K562 (cell line): ENCODE measurements at regions of chr6 and their contacts with region 1.

Region 1: GRCh38 chr6:28489366-28490204 is 26.0 kb downstream of the GPX6 start:
- DNase-seq: peak; percentile 90 to 98 (median 93)
- ATAC-seq: peak; percentile 91
- H3K4me3 ChIP-seq: peak overlapping the region; percentile 57
- H3K27ac ChIP-seq: peak overlapping the region; percentile 88
- H3K4me1 ChIP-seq: peaks cover 9 to 26% of the 10 kb centered on the region in 2 experiments
- H3K27me3 ChIP-seq: no peaks in the 10 kb centered on the region
- CTCF ChIP-seq: no peak
- EP300 ChIP-seq: peak; percentile 62
- POLR2A ChIP-seq: peak; percentile 77
- RAD21 ChIP-seq: no peak

Region 2: DNA sequence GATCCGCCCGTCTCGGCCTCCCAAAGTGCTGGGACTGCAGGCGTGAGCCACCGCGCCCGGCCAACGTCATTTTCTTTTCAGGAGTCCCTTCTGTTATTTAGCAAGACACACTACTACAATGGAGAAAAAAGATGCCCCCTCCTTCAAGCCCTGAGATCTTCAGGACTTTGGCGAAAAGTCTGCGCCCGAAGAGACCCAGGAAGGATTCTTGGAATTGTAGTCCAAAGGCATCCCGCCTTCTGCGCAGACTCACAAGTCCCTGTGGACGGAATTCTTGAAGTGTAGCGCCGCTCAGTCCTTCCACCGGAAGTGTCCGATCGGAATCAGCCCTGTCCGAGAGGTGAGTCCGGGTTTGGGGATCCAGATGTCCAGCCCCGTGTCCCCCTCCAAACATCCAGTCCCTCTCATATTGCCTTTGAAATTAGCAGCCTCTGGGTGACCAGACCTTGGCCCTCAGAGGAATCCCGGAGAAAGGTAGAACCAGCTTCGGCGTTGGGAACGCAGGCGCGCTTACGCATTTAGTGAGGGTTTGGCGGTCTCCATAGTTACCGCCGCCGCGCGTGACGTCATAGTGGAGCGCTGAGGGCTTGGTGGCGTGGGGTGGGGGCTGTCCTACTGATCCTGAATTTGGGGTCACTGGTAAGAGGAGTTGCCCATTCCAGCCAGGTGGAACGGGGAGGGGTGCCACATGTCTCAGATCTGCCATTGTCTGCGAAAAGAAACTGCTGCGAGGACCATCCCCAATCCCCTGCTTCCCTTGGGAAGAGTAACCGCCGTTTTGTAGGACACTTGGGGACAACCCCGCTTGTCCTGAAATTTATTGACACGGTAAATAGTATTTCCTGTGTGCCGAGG is 408.7 kb before region 1 on chr6:
- CTCF ChIA-PET with region 1: no interaction called
- POLR2A ChIA-PET with region 1: no interaction called
- in situ Hi-C with region 1: no loop called
- intact Hi-C with region 1: loop called (anchors 5 kb)
- DNase-seq: peak; percentile 91 to 99 (median 93)
- ATAC-seq: peak; percentile 91
- H3K4me3 ChIP-seq: peak overlapping the region; percentile 96
- H3K27ac ChIP-seq: peak overlapping the region; percentile 94
- H3K4me1 ChIP-seq: peaks cover 0 to 2% of the 10 kb centered on the region in 2 experiments; a peak in 4 of 5 replicates
- H3K27me3 ChIP-seq: no peaks in the 10 kb centered on the region
- CTCF ChIP-seq: no peak; a peak in 1 of 6 replicates
- EP300 ChIP-seq: peak; percentile 68; the same call in 1 of the 2 replicates
- POLR2A ChIP-seq: peak; percentile 79
- RAD21 ChIP-seq: no peak; a peak in 2 of 4 replicates

Region 3: DNA sequence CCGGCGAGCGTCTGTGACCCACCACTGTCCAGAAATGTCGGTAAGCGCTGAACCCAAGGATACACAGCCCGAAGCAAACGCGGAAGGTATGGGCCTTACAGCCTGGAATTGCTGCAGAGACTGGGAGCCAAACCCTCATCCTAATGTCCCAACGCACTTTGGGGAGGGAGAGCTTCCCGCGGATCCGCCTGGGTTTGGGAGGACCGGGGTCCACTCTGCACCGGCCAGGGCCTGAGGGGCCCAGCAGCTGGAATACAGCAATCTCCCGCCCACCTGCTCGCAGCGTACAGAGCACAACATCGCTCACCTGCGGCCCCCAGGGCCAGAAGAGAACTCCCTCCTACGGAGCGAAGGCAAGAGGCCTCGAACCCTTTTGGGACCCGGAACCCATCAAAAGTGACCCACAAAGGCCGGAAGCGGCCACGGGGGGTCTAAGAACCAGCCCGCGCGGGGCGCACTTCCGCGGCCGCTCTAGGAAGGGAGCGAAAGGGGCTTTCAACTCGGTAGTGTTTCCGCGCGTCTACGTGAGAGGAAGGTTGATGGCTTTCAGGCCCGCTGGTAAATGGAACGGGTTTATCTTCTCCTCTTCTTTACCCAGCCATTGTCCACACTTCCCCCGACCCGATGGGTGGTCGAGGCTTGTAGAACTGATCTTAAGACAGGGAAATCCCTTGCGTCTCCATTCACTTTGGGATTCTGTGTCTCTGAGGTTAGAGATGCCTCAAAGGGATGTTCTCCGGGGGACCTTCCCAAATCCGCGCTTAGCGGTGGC is 90.0 kb before region 1 on chr6 and contains the start of gene ZSCAN12:
- CTCF ChIA-PET with region 1: no interaction called
- POLR2A ChIA-PET with region 1: interaction called, 3 read pairs
- in situ Hi-C with region 1: no loop called
- intact Hi-C with region 1: loop called (anchors 1 kb)
- DNase-seq: peak; percentile 90 to 99 (median 91)
- ATAC-seq: peak; percentile 88
- H3K4me3 ChIP-seq: peak within 1 kb of the TSS; percentile 61
- H3K27ac ChIP-seq: peak within 1 kb of the TSS; percentile 80
- H3K4me1 ChIP-seq: peaks cover 21 to 36% of the 10 kb centered on the region in 2 experiments
- H3K27me3 ChIP-seq: no peaks in the 10 kb centered on the region
- CTCF ChIP-seq: peak; percentile 74 to 82 (median 79)
- EP300 ChIP-seq: peak; percentile 74
- POLR2A ChIP-seq: peak; percentile 97
- RAD21 ChIP-seq: peak; percentile 37 to 47
- polyA plus RNA-seq, gene ZSCAN12: 2.5 to 7.9 TPM

Region 4: GRCh38 chr6:28506807-28507475 is 17.4 kb after region 1 on chr6:
- CTCF ChIA-PET with region 1: no interaction called
- POLR2A ChIA-PET with region 1: interaction called, 10 read pairs
- in situ Hi-C with region 1: no loop called
- intact Hi-C with region 1: no loop called
- DNase-seq: no peak
- ATAC-seq: no peak
- H3K4me3 ChIP-seq: no peak overlapping the region
- H3K27ac ChIP-seq: no peak overlapping the region
- H3K4me1 ChIP-seq: peaks cover 15 to 21% of the 10 kb centered on the region in 2 experiments
- H3K27me3 ChIP-seq: no peaks in the 10 kb centered on the region
- CTCF ChIP-seq: no peak
- EP300 ChIP-seq: no peak
- POLR2A ChIP-seq: no peak
- RAD21 ChIP-seq: no peak

Region 5: GRCh38 chr6:28816909-28817807 is 327.6 kb after region 1 on chr6:
- CTCF ChIA-PET with region 1: no interaction called
- POLR2A ChIA-PET with region 1: no interaction called
- in situ Hi-C with region 1: no loop called
- intact Hi-C with region 1: loop called (anchors 10 kb)
- DNase-seq: peak; percentile 63 to 95 (median 76)
- ATAC-seq: peak; percentile 91
- H3K4me3 ChIP-seq: peak overlapping the region; percentile 45
- H3K27ac ChIP-seq: peak overlapping the region; percentile 59
- H3K4me1 ChIP-seq: peaks cover 7 to 11% of the 10 kb centered on the region in 2 experiments; a peak in 4 of 5 replicates
- H3K27me3 ChIP-seq: no peaks in the 10 kb centered on the region
- CTCF ChIP-seq: no peak
- EP300 ChIP-seq: peak; percentile 77
- POLR2A ChIP-seq: no peak
- RAD21 ChIP-seq: no peak; a peak in 1 of 4 replicates

Region 6: GRCh38 chr6:28863604-28864320 is 374.2 kb after region 1 on chr6:
- CTCF ChIA-PET with region 1: no interaction called
- POLR2A ChIA-PET with region 1: no interaction called
- in situ Hi-C with region 1: no loop called
- intact Hi-C with region 1: no loop called
- DNase-seq: peak; percentile 64 to 92 (median 68)
- ATAC-seq: peak; percentile 72
- H3K4me3 ChIP-seq: peak overlapping the region; percentile 64
- H3K27ac ChIP-seq: peak overlapping the region; percentile 79
- H3K4me1 ChIP-seq: peaks cover 14 to 25% of the 10 kb centered on the region in 2 experiments; a peak in 4 of 5 replicates
- H3K27me3 ChIP-seq: no peaks in the 10 kb centered on the region
- CTCF ChIP-seq: 0 out of 6 replicates have a peak, but pooled peaks of 1 of the 3 experiments have one; percentile 61
- EP300 ChIP-seq: peak; percentile 76
- POLR2A ChIP-seq: peak; percentile 54; the same call in 1 of the 2 replicates
- RAD21 ChIP-seq: peak in 1 of 2 experiments; percentile 63; a peak in 3 of 4 replicates